ENCODE measurements at regions of chr10 and their contacts with region 1.

Region 1: GRCh38 chr10:92592761-92593618 is at the start of gene KIF11:
- DNase-seq: peak; percentile 98
- H3K4me3 Mint-ChIP-seq: peak within 1 kb of the TSS; percentile 97
- H3K27ac Mint-ChIP-seq: peak within 1 kb of the TSS; percentile 100
- H3K4me1 Mint-ChIP-seq: peaks cover 40% of the 10 kb centered on the region
- H3K27me3 Mint-ChIP-seq: no peaks in the 10 kb centered on the region
- total RNA-seq, gene KIF11: 56.3 to 57.3 TPM

Region 2: DNA sequence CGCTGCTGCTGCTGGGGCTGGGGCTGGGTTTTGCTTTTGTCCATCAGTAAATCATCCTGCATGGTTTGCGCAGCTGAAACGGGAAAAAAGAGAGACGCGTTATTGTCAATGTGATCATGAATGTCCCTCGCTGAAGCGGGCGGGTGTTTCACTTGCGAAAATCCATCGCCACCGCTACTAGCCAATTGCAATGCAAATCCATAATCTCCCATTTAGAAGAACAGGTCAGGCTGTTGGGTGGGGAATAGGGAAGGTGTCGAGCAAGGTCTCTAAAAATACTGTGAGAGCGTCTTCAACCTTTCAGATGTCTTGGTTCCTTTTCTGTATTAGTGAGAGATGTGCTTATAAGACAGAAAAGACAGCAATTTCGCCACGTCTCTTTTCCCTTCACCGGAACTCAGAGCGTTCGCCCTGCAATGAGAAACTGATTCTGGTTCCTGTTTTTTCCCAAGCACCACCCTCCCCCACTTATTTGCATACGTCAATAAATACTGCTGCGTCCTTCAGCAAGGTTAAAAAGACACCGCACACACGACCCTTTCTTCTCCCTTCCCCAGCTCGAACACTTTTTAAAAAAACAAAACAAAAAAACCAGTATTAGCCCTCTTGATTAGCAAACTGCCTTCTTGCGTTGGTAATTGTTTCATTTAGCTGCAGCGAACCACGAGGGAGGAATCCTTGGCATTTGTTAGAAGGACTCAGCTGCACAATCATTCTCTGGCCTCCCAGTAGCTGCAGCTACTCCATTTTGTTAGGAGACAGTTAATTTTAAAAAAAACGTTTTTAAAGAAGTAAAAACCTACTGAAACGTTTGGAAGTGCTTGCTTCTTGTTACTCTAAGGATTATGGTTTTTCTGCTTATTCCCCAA is 352.5 kb before region 1 on chr10:
- CTCF ChIA-PET with region 1: no interaction called
- POLR2A ChIA-PET with region 1: no interaction called
- intact Hi-C with region 1: loop called (anchors 5 kb)
- DNase-seq: peak; percentile 38
- H3K4me3 Mint-ChIP-seq: peak overlapping the region; percentile 72
- H3K27ac Mint-ChIP-seq: no peak overlapping the region
- H3K4me1 Mint-ChIP-seq: peaks cover 33% of the 10 kb centered on the region
- H3K27me3 Mint-ChIP-seq: peaks cover 9% of the 10 kb centered on the region

Region 3: DNA sequence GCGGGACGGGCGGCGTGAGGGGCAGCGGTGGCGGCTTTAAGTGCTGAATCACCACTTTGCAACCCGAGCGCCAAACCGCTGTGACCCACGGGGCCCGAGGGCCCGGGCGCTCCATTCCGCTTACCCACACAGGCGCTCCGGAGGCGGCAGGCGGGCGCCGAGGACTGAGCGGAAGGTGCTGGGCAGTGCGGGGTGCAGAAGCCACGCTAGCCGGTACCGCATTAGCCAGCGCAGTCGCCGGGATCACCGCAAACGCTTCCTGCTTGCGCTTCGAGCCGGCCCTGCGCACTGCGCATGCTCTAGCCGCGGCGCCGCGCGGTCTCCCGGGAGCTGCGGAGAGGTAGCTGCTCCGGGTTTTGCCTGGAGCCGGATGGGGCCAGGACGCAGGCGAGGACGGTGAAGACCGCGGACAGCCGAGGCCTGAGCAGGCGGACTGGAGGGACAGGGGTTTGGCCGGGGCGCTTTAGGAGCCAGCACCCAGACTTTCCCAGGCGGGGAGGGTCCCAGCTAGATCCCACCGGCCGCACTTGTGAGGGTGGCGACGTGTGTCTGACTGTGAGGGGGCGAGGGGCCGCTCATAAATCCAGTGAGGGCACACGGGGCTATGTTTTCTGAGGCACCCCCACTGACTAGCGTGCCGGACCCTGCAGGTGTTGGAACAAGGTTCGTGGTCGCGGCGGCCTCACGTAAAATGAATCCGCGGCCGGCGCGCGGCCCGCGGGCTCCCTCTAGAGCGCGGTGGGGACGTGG is 19.0 kb before region 1 on chr10 and contains the start of gene IDE:
- CTCF ChIA-PET with region 1: interaction called, 32 read pairs
- POLR2A ChIA-PET with region 1: interaction called, 15 read pairs
- intact Hi-C with region 1: loop called (anchors 1 kb)
- DNase-seq: peak; percentile 90
- H3K4me3 Mint-ChIP-seq: peak within 1 kb of the TSS; percentile 56
- H3K27ac Mint-ChIP-seq: peak within 1 kb of the TSS; percentile 85
- H3K4me1 Mint-ChIP-seq: peaks cover 34% of the 10 kb centered on the region
- H3K27me3 Mint-ChIP-seq: no peaks in the 10 kb centered on the region
- total RNA-seq, gene IDE: 32.3 to 40.1 TPM

Region 4: GRCh38 chr10:92689663-92690210 is 96.7 kb after region 1 on chr10 and contains the start of gene HHEX:
- CTCF ChIA-PET with region 1: no interaction called
- POLR2A ChIA-PET with region 1: no interaction called
- intact Hi-C with region 1: loop called (anchors 5 kb)
- DNase-seq: peak; percentile 46
- H3K4me3 Mint-ChIP-seq: peak within 1 kb of the TSS; percentile 53
- H3K27ac Mint-ChIP-seq: no peak within 1 kb of the TSS
- H3K4me1 Mint-ChIP-seq: peaks cover 20% of the 10 kb centered on the region
- H3K27me3 Mint-ChIP-seq: peaks cover 60% of the 10 kb centered on the region
- total RNA-seq, gene HHEX: 0.31 to 0.55 TPM

Region 5: GRCh38 chr10:93496322-93497041 is 903.5 kb after region 1 on chr10 and contains the start of gene CEP55:
- CTCF ChIA-PET with region 1: no interaction called
- POLR2A ChIA-PET with region 1: no interaction called
- intact Hi-C with region 1: loop called (anchors 2 kb)
- DNase-seq: peak; percentile 98
- H3K4me3 Mint-ChIP-seq: peak within 1 kb of the TSS; percentile 90
- H3K27ac Mint-ChIP-seq: peak within 1 kb of the TSS; percentile 74
- H3K4me1 Mint-ChIP-seq: peaks cover 27% of the 10 kb centered on the region
- H3K27me3 Mint-ChIP-seq: no peaks in the 10 kb centered on the region
- total RNA-seq, gene CEP55: 88.0 to 91.3 TPM